ENCODE measurements at regions of chr2 and their contacts with region 1.

Region 1: GRCh38 chr2:112542123-112542983 is at the start of gene POLR1B:
- DNase-seq: peak; percentile 88
- ATAC-seq: peak; percentile 80
- H3K4me3 ChIP-seq: peak within 1 kb of the TSS; percentile 65 to 99 (median 94)
- H3K4me3 Mint-ChIP-seq: no peak within 1 kb of the TSS
- H3K27ac ChIP-seq: peak within 1 kb of the TSS; percentile 85 to 94
- H3K27ac Mint-ChIP-seq: no peak within 1 kb of the TSS
- H3K4me1 ChIP-seq: peaks cover 15 to 18% of the 10 kb centered on the region in 2 donors
- H3K4me1 Mint-ChIP-seq: peaks cover 15% of the 10 kb centered on the region
- H3K27me3 ChIP-seq: no peaks in the 10 kb centered on the region
- H3K27me3 Mint-ChIP-seq: no peaks in the 10 kb centered on the region
- CTCF ChIP-seq: no peak
- total RNA-seq, gene POLR1B: 32.5 and 34.2 TPM in 2 replicates

Region 2: GRCh38 chr2:112168422-112169102 is 373.8 kb before region 1 on chr2:
- CTCF ChIA-PET with region 1: no interaction called
- POLR2A ChIA-PET with region 1: no interaction called
- intact Hi-C with region 1: no loop called
- DNase-seq: no peak
- ATAC-seq: no peak
- H3K4me3 ChIP-seq: no peak overlapping the region
- H3K4me3 Mint-ChIP-seq: no peak overlapping the region
- H3K27ac ChIP-seq: no peak overlapping the region
- H3K27ac Mint-ChIP-seq: no peak overlapping the region
- H3K4me1 ChIP-seq: no peaks in the 10 kb centered on the region
- H3K4me1 Mint-ChIP-seq: no peaks in the 10 kb centered on the region
- H3K27me3 ChIP-seq: no peaks in the 10 kb centered on the region
- H3K27me3 Mint-ChIP-seq: peaks cover 4% of the 10 kb centered on the region
- CTCF ChIP-seq: no peak

Region 3: GRCh38 chr2:112254466-112255239 is 287.7 kb before region 1 on chr2 and contains the start of gene ZC3H8:
- CTCF ChIA-PET with region 1: interaction called, 3 read pairs
- POLR2A ChIA-PET with region 1: no interaction called
- intact Hi-C with region 1: loop called (anchors 2 kb)
- DNase-seq: peak; percentile 95
- ATAC-seq: peak; percentile 89
- H3K4me3 ChIP-seq: peak within 1 kb of the TSS; percentile 72 to 84 (median 79)
- H3K4me3 Mint-ChIP-seq: peak within 1 kb of the TSS; percentile 93
- H3K27ac ChIP-seq: peak within 1 kb of the TSS; percentile 83 to 93
- H3K27ac Mint-ChIP-seq: peak within 1 kb of the TSS; percentile 92
- H3K4me1 ChIP-seq: peaks cover 9 to 17% of the 10 kb centered on the region in 2 donors
- H3K4me1 Mint-ChIP-seq: peaks cover 23% of the 10 kb centered on the region
- H3K27me3 ChIP-seq: no peaks in the 10 kb centered on the region
- H3K27me3 Mint-ChIP-seq: no peaks in the 10 kb centered on the region
- CTCF ChIP-seq: no peak
- total RNA-seq, gene ZC3H8: 26.0 and 27.2 TPM in 2 replicates

Region 4: DNA sequence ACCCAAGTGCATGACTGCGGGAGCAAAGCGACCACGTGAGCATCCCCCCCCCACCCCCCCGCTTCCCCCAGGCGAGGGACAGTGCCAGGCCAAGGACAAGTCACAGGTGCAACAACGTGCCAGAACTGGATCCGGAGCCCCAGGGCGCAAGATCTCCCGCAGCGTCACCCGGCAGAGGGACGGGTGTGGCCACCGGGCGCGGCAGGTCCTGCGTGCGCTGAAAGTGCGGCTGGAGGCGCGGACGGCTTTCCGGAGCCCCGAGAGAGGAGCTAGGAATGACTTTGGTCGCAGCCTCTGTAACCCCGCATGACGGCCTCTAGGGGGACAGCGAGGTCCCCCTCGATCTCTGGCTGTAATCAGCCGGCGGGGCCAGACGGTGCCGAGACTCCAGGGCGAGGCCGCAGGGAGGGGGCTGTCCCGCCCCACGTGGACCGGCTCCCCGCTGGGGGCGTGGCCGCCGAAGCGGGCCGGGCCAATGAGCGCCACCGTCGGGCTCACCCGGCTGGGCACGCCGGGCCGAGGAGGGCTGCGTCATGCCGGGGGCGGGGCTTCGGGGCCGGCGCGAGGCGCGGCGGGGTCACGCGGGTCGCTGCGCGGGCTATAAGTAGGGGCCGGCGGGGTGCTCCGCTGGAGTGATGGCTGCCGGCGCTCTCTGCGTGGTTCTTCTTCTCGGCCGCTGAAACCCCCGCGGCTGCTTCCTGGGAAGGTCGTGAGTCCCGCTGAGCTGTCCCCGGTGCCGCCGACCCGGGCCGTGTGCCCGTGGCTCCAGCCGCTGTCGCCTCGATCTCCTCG is 103.2 kb after region 1 on chr2 and contains the start of gene SLC20A1:
- CTCF ChIA-PET with region 1: no interaction called
- POLR2A ChIA-PET with region 1: no interaction called
- intact Hi-C with region 1: loop called (anchors 1 kb)
- DNase-seq: peak; percentile 98
- ATAC-seq: peak; percentile 93
- H3K4me3 ChIP-seq: peak within 1 kb of the TSS; percentile 65 to 98 (median 90)
- H3K4me3 Mint-ChIP-seq: peak within 1 kb of the TSS; percentile 94
- H3K27ac ChIP-seq: peak within 1 kb of the TSS; percentile 90 to 96
- H3K27ac Mint-ChIP-seq: peak within 1 kb of the TSS; percentile 90
- H3K4me1 ChIP-seq: peaks cover 15 to 20% of the 10 kb centered on the region in 2 donors
- H3K4me1 Mint-ChIP-seq: peaks cover 26% of the 10 kb centered on the region
- H3K27me3 ChIP-seq: no peaks in the 10 kb centered on the region
- H3K27me3 Mint-ChIP-seq: no peaks in the 10 kb centered on the region
- CTCF ChIP-seq: peak; percentile 69
- total RNA-seq, gene SLC20A1: 54.9 and 57.1 TPM in 2 replicates

Measured in B cell (primary cell).